AG04449 (cell line): ENCODE measurements at regions of chr22 and their contacts with region 1.

Region 1: GRCh38 chr22:27223317-27224177 is 566.2 kb downstream of the MIAT start:
- DNase-seq: peak; percentile 79
- H3K4me3 ChIP-seq: peak overlapping the region; percentile 44
- CTCF ChIP-seq: no peak

Region 2: DNA sequence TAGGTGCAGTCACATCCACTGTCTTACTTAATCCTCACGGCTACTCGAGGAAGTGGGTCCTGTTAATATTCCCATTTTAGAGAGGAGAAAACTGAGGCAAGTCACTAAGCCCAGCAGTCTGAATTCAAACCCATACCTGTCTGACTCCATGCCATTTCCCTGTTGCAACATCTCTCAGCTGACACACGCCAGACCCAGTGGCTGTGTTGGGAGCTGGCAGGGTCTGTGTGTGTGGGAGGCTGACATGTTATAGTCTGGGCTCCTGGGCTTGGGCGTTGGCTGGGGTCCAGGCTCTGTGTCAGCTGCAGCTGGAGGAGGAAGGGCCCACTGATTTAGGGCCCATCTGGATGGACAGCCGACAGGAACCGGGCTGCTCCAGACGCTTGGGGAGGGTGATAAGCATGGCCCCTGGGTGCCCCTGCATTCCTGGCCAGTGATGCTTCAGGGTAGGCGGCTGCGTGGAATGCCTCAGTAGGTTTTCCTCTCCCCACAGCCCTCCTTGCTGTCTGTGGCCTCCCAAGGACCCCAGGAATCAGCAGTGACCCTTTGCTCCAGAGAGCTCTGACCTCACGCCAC is 15.5 kb after region 1 on chr22:
- CTCF ChIA-PET with region 1: interaction called, 3 read pairs
- POLR2A ChIA-PET with region 1: interaction called, 16 read pairs
- DNase-seq: peak; percentile 92
- H3K4me3 ChIP-seq: no peak overlapping the region
- CTCF ChIP-seq: no peak